ENCODE measurements at regions of chr7 and their contacts with region 1.

Region 1: DNA sequence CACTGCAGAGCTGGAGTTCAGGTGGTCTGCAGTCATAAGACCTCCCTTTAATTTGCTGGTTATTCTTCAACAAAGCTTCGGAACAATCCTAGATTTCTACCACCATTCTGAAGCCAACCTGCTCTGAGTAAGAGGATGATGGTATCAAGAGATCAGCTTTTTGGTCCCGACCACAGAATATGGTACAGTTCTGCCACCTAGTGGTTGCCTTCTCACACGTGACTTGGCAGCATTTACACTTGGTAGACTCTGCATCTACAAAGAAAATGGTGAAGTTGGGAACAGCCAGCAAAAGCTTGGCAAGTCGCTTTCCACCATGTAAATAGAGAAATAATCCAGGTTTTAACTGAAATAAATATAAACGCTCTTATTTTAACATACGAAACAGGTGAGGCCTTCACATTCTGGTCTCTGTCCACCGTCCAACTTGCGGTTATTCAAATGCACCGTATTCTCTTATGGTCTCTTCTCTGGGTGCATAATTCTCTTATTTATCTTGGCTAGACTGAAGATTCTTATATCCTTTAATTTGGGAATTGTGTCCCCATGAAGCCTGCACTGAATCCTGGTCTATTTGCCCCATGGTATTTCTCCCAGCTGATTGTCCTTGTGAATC is 173.9 kb upstream of the GRM3 start:
- DNase-seq: peak; percentile 67 to 68
- H3K4me3 ChIP-seq: no peak overlapping the region
- H3K27ac ChIP-seq: no peak overlapping the region
- H3K4me1 ChIP-seq: no peaks in the 10 kb centered on the region
- H3K27me3 ChIP-seq: no peaks in the 10 kb centered on the region
- CTCF ChIP-seq: peak; percentile 38 to 89 (median 85)
- EP300 ChIP-seq: no peak
- POLR2A ChIP-seq: no peak
- RAD21 ChIP-seq: peak; percentile 99

Region 2: DNA sequence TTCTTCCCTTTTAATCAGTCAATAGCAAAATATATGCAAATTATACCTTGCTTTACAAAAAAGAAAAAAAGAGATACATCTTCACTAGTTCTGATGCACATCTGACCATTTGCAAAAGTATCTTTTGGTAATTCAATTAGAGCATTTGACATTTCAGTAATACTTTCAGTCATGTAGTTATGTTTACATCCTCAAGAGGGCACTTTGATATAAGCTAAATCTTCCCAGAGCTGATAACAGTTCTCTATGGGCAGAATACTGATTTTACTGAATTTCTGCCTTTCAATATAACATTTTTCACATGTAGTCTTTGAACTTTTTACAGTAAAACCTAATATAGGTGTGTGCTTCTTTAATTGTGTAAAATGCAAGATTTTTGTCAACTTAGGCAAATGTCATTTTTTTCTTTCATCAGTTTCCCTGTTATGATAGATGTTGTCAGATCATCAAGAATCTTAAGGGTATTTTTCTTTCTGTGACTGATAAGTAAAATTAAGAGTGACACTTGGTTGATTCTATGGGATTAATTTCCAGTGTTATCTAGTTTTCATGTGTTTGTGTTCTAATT is 579.5 kb before region 1 on chr7:
- CTCF ChIA-PET with region 1: interaction called, 14 read pairs
- POLR2A ChIA-PET with region 1: interaction called, 3 read pairs
- DNase-seq: no peak
- H3K4me3 ChIP-seq: no peak overlapping the region
- H3K27ac ChIP-seq: no peak overlapping the region
- H3K4me1 ChIP-seq: peaks cover 0 to 1% (median 0%) of the 10 kb centered on the region in 4 experiments; a peak in 1 of 7 replicates
- H3K27me3 ChIP-seq: no peaks in the 10 kb centered on the region
- CTCF ChIP-seq: peak in 2 of 3 experiments; percentile 33 to 53; a peak in 2 of 4 replicates
- EP300 ChIP-seq: no peak
- POLR2A ChIP-seq: no peak
- RAD21 ChIP-seq: peak; percentile 78 to 87

Region 3: GRCh38 chr7:86485827-86486226 is 16.0 kb after region 1 on chr7:
- CTCF ChIA-PET with region 1: interaction called, 10 read pairs
- POLR2A ChIA-PET with region 1: no interaction called
- DNase-seq: no peak
- H3K4me3 ChIP-seq: no peak overlapping the region
- H3K27ac ChIP-seq: no peak overlapping the region
- H3K4me1 ChIP-seq: no peaks in the 10 kb centered on the region
- H3K27me3 ChIP-seq: no peaks in the 10 kb centered on the region
- CTCF ChIP-seq: no peak
- EP300 ChIP-seq: no peak
- POLR2A ChIP-seq: no peak
- RAD21 ChIP-seq: no peak

Region 4: DNA sequence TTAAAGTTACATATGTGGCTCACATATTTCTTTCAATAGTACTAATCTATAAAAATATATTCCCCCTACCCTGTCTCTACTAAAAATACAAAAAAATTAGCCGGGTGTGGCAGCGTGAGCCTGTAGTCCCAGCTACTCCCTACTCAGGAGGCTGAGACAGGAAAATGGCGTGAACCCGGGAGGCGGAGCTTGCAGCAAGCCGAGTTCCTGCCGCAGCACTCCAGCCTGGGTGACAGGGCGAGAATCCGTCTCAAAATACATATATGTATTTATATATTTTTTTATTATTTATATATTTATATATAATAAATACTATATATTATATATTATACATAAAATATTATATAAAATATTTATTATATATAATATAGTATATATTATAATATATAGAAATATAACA is 104.2 kb after region 1 on chr7:
- CTCF ChIA-PET with region 1: no interaction called
- POLR2A ChIA-PET with region 1: no interaction called
- DNase-seq: no peak
- H3K4me3 ChIP-seq: no peak overlapping the region
- H3K27ac ChIP-seq: no peak overlapping the region
- H3K4me1 ChIP-seq: no peaks in the 10 kb centered on the region
- H3K27me3 ChIP-seq: no peaks in the 10 kb centered on the region
- CTCF ChIP-seq: no peak
- EP300 ChIP-seq: no peak
- POLR2A ChIP-seq: no peak
- RAD21 ChIP-seq: no peak

Measured in H1 (cell line).